Posterior vena cava (tissue), 2 donors: ENCODE measurements at regions of chr18 and their contacts with region 1.

Region 1: DNA sequence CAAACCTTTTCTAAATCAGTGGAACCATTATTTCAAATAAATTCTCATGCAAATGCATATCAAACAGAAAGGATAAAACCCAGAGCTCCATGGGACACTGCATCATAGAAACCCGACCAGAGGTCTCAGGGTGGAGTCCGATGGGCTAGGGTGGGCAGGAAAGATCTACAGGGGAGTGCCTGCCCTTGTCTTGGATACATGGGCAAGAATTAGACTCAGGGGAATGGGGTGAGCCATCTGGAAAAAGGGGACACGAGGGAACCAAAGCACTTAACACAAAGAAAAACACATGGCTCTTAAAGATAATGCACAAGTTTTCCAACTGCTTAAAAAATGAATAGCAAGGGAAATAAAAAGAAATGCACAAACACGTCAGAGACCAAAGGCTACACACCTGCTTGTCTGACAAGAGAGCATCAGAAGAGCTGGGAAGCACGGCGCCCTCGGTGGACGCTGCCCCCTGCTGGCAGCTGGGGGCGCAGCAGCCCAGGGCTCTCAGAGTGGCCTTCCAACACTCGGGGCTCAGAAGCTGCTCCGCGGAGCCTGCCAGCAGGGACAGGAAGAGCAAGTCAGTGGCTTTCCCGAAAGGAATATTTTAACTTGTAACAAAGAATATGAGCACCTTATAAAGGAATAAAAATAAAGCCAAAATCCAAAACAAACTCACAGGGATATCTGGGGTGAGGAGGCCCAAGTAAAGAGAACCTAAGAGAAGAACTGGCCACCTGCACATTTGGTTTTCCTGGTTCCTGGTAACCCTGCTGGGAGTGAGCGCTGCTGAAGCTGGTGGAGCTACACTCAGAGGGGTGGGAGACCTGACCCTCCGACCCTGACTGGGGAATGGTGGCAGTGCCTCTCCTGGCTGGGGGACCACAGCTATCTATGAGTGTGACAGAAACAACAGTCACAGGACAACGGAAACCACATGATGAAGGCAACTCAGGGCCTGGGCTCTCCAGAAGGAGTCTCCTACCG is 54.5 kb downstream of the SIGLEC15 start:
- DNase-seq: peak; percentile 93

Region 2: DNA sequence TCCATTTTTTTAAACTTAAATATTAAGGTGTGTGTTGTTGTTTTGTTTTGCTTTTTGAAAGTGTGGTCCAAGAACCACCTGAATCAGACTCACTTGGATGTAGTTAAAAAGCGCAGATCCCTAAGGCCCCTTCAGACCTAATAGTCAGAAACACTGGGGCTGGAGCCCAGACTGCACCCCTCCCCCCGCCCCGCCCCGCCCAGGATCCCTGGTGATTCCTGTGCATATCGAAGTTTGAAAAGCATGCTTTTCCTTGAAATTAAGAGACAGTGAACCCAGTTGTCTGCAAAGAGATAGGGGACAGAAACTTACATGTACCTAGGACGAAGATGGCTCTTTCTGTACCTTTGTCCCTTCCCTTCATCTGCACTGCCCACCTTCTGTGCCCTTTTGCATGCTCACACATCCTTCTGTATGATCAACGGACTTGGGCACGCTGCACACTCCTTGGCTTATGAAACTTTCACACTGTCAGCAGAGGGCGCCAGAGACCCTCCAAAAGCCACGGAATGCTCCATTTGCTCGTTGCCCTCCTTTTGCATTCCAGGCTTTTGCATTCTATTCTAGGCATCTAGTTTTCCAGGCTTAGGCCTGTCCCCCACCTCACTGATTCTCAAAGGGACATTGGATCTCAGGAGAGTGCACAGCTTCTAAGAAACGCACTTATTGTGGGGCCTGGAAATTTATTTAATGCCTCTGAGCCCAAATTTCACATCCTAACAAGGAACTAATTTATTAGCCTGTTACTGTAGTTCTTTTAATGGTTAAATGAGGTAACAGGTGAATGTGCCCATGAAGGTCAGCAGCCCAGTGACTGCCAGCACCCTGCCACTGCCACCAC is 188.8 kb before region 1 on chr18:
- intact Hi-C with region 1: loop called (anchors 2 to 10 kb)
- DNase-seq: peak; percentile 91

Region 3: GRCh38 chr18:45900623-45901022 is 20.7 kb after region 1 on chr18:
- intact Hi-C with region 1: no loop called
- DNase-seq: no peak

Region 4: DNA sequence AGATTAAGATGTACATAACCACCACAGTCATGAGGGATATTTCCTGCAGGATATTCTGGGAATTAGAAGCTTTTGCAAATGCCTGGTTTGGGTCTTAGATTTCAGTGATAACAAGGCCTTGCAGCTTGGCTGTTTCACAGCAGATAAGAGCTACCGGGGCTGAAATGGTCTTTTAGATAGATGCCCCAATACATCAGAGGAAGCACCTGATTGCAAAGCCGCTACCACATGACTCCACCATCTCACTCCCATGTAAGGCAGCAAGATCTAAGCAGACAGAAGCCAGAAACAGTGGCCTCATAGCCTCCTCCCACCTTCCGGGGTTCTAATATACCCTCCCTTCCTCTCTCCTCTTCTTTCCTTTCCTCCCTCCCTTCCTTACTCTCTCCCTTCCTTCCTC is 118.3 kb after region 1 on chr18:
- intact Hi-C with region 1: no loop called
- DNase-seq: no peak